Vagina (tissue), 2 donors: ENCODE measurements at regions of chr2 and their contacts with region 1.

Region 1: GRCh38 chr2:151261231-151261976 is at the start of gene RBM43:
- DNase-seq: peak in 1 of 2 donors; percentile 95
- H3K4me3 ChIP-seq: peak within 1 kb of the TSS; percentile 79 to 90
- H3K27ac ChIP-seq: peak within 1 kb of the TSS; percentile 98
- H3K4me1 ChIP-seq: peaks cover 20% of the 10 kb centered on the region
- H3K27me3 ChIP-seq: no peaks in the 10 kb centered on the region
- CTCF ChIP-seq: no peak
- POLR2A ChIP-seq: no peak
- total RNA-seq, gene RBM43: 3.9 TPM

Region 2: GRCh38 chr2:149597668-149598326 is 1663.6 kb before region 1 on chr2:
- intact Hi-C with region 1: loop called (anchors 10 kb)
- DNase-seq: no peak
- H3K4me3 ChIP-seq: peak overlapping the region in 1 of 2 donors; percentile 3
- H3K27ac ChIP-seq: no peak overlapping the region
- H3K4me1 ChIP-seq: peaks cover 6% of the 10 kb centered on the region
- H3K27me3 ChIP-seq: no peaks in the 10 kb centered on the region
- CTCF ChIP-seq: peak; percentile 44 to 84 (median 83)
- POLR2A ChIP-seq: no peak

Region 3: GRCh38 chr2:151289369-151290088 is 28.1 kb after region 1 on chr2 and contains the start of gene NMI:
- intact Hi-C with region 1: loop called (anchors 2 kb)
- DNase-seq: peak in 1 of 2 donors; percentile 92
- H3K4me3 ChIP-seq: peak within 1 kb of the TSS; percentile 70 to 86
- H3K27ac ChIP-seq: peak within 1 kb of the TSS; percentile 98
- H3K4me1 ChIP-seq: peaks cover 22% of the 10 kb centered on the region
- H3K27me3 ChIP-seq: no peaks in the 10 kb centered on the region
- CTCF ChIP-seq: no peak
- POLR2A ChIP-seq: no peak
- total RNA-seq, gene NMI: 9.3 TPM

Region 4: DNA sequence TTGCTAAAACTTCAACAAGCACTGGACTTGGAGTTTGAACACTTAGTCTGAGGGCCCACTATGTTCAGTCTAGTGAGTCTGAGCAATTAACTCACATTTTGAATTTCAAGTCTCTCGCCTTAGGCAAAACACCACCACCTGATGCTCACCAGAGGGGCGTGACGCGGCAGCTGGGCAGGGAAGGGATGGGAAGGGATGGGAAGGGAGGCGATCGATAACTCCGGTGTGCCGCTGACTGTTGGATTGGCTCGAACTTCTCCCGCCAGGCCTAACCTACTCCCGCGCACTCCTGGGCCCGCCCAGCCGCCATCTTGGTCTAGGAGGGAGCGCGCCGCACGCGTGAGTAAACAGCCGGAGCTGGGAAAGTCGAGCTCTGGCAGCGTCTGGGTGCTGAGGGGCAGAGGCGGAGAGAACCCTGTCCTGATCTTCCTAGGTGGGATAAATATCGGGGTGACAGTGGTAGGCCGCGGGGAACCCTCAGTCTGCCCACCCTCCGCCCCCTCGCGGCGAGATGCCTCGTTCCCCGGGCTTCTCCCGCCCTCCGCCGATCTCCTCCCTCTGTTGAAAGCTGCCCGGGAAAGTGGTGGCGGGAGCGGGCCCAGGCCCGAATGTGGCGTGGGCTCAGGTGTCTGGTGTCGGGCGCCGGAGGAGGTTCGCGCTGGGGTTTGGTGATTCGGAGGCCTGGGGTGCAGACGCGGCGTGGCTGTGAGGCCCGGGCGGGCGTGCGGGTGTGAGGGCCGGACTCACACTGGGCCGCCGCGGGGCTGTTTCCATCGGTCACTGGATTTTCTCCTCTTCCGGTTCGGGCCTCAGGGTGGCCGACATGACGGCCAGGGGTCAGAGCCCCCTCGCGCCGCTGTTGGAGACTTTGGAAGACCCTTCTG is 148.4 kb after region 1 on chr2 and contains the start of gene RIF1:
- intact Hi-C with region 1: loop called (anchors 10 kb)
- DNase-seq: peak in 1 of 2 donors; percentile 91
- H3K4me3 ChIP-seq: peak within 1 kb of the TSS; percentile 91 to 97
- H3K27ac ChIP-seq: peak within 1 kb of the TSS; percentile 94
- H3K4me1 ChIP-seq: peaks cover 25% of the 10 kb centered on the region
- H3K27me3 ChIP-seq: no peaks in the 10 kb centered on the region
- CTCF ChIP-seq: peak in 2 of 3 experiments; percentile 74 to 92
- POLR2A ChIP-seq: no peak
- total RNA-seq, gene RIF1: 31.7 TPM